ENCODE measurements at regions of chr12 and their contacts with region 1.

Region 1: DNA sequence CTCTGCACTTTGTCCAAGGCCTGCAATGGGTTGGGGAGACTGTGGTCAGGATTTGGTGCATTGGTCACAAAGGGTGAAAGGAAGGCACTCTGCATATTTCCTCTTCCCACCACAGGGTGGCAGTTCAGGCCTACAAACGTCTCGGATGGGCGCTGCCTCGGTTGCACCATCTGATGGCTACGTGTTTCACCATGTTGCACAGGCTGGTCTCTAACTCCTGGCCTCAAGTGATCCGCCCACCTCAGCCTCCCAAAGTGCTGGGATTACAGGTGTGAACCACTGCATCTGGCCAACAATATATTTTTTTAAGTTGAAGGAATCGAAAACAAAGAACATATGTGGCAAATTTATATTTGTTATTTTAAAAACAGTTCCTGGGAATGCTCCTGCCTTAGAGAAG is 35.1 kb downstream of the TMBIM6 start:
- DNase-seq: peak; percentile 87
- H3K4me3 Mint-ChIP-seq: no peak overlapping the region
- H3K27ac Mint-ChIP-seq: no peak overlapping the region
- H3K4me1 Mint-ChIP-seq: peaks cover 11% of the 10 kb centered on the region
- H3K27me3 Mint-ChIP-seq: peaks cover 20% of the 10 kb centered on the region

Region 2: GRCh38 chr12:49636979-49637755 is 139.2 kb before region 1 on chr12:
- intact Hi-C with region 1: loop called (anchors 5 kb)
- DNase-seq: peak; percentile 88
- H3K4me3 Mint-ChIP-seq: no peak overlapping the region
- H3K27ac Mint-ChIP-seq: no peak overlapping the region
- H3K4me1 Mint-ChIP-seq: peaks cover 11% of the 10 kb centered on the region
- H3K27me3 Mint-ChIP-seq: no peaks in the 10 kb centered on the region

Region 3: DNA sequence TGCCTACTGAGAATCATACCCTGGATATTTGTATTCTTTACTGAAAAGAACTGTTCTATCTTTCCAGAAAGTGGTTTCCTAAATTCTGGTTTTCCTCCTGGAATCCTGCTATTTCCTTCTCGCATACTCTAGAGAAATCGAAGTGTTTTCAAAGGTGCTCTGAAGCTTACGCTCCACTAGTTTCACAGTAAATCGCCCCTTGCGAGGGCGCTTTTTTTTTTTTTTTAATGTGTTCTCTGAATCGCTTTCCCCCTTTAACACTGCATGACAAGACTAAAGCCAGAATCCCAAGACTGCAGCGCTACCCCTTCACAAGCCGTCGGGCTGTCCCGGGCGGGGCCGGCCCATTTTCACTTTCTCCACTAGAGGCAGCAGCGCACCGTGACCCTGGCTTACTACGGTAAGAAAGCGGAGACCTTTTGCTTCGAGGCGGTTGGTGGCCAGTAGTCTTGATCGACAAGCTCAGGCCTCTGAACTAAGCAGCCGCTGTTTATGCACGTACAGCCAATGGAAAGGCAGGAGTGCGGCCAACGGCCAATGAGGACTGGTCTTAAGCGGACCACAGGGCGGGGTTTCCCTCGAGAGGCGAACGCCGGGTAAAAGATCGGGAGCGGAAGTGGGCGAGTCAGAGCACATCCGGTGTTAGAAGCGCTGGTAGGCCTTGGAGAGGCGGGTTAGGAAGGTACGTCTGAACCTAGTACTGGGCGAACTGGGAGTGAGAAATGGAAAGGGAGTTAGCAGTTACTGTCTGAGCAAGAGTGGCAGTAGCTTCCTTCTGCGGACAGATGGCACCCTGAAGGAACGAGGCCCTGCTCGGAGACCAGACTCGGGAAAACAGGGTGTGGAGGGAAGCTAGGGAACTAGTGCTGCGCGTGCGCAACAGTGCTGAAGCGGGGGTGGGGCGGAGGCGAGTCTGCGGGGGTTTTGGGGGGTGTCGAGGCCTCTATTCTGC is 35.2 kb before region 1 on chr12 and contains the start of gene TMBIM6:
- intact Hi-C with region 1: loop called (anchors 1 kb)
- DNase-seq: peak; percentile 100
- H3K4me3 Mint-ChIP-seq: peak within 1 kb of the TSS; percentile 90
- H3K27ac Mint-ChIP-seq: peak within 1 kb of the TSS; percentile 95
- H3K4me1 Mint-ChIP-seq: peaks cover 31% of the 10 kb centered on the region
- H3K27me3 Mint-ChIP-seq: peaks cover 5% of the 10 kb centered on the region
- total RNA-seq, gene TMBIM6: 370 and 372 TPM in 2 replicates

Region 4: GRCh38 chr12:49828133-49829091 is 52.0 kb after region 1 on chr12 and contains the start of gene NCKAP5L:
- intact Hi-C with region 1: no loop called
- DNase-seq: peak; percentile 97
- H3K4me3 Mint-ChIP-seq: peak within 1 kb of the TSS; percentile 100
- H3K27ac Mint-ChIP-seq: peak within 1 kb of the TSS; percentile 95
- H3K4me1 Mint-ChIP-seq: peaks cover 16% of the 10 kb centered on the region
- H3K27me3 Mint-ChIP-seq: peaks cover 18% of the 10 kb centered on the region
- total RNA-seq, gene NCKAP5L: 4.8 and 5.0 TPM in 2 replicates

Measured in activated CD4-positive, alpha-beta T cell treated with anti-CD3 and anti-CD28 coated beads, Interleukin-2, amount 10 ng/mL, durations not matched to agents 24 days and 14 days (primary cell).